Endothelial cell of umbilical vein (primary cell): ENCODE measurements at regions of chr10 and their contacts with region 1.

Region 1: DNA sequence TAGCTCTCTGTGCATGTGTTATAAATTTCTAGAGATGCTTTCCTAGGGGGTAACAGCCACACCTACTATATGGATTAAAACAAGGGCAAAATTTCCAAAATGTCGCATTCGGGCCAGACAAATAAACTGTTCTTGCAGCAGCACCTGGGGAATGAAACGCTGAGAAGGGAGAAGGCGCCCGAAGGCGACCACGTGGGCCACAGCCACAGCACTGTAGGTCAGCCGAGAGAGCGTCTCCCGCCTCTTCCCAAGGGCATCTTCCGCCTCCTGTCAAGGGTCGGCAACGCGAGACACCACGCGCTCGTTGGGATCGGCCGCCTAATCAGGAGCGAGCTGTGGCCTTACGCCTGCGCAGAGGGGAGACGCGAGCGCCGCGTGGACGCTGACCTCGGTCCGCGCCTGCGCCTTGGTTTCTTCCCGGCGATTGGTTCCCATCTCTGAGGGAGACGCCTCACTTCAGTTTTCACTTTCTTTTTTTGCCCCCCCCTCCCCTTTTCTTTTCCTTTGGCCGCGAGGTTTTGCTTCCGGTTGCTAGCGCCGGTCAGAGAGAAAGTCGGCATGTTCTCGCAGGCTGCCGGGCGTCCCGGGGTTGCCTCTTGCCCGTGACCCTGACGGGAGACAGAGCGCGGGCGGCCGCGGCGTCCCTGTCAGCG is at the start of gene TASOR2:
- DNase-seq: peak; percentile 99
- H3K4me3 ChIP-seq: peak within 1 kb of the TSS; percentile 62 to 97 (median 89)
- H3K27ac ChIP-seq: peak within 1 kb of the TSS; percentile 68
- H3K4me1 ChIP-seq: peaks cover 9% of the 10 kb centered on the region
- H3K27me3 ChIP-seq: peaks cover 6 to 17% of the 10 kb centered on the region in 2 experiments
- CTCF ChIP-seq: no peak
- POLR2A ChIP-seq: peak; percentile 60
- total RNA-seq, gene TASOR2: 48.9 and 49.9 TPM in 2 replicates

Region 2: GRCh38 chr10:5548527-5549223 is 135.8 kb before region 1 on chr10:
- CTCF ChIA-PET with region 1: no interaction called
- POLR2A ChIA-PET with region 1: no interaction called
- dilution Hi-C with region 1: no loop called
- intact Hi-C with region 1: loop called (anchors 1 kb)
- DNase-seq: peak; percentile 89
- H3K4me3 ChIP-seq: no peak overlapping the region
- H3K27ac ChIP-seq: peak overlapping the region; percentile 93
- H3K4me1 ChIP-seq: peaks cover 48% of the 10 kb centered on the region
- H3K27me3 ChIP-seq: no peaks in the 10 kb centered on the region
- CTCF ChIP-seq: no peak
- POLR2A ChIP-seq: peak; percentile 5

Region 3: GRCh38 chr10:5666830-5667630 is 17.4 kb before region 1 on chr10:
- CTCF ChIA-PET with region 1: no interaction called
- POLR2A ChIA-PET with region 1: no interaction called
- dilution Hi-C with region 1: no loop called
- intact Hi-C with region 1: loop called (anchors 1 kb)
- DNase-seq: peak; percentile 17
- H3K4me3 ChIP-seq: peak overlapping the region in 1 of 3 experiments; percentile 94
- H3K27ac ChIP-seq: no peak overlapping the region
- H3K4me1 ChIP-seq: peaks cover 6% of the 10 kb centered on the region
- H3K27me3 ChIP-seq: peaks cover 0 to 5% of the 10 kb centered on the region in 2 experiments
- CTCF ChIP-seq: no peak
- POLR2A ChIP-seq: no peak

Region 4: GRCh38 chr10:5800790-5801189 is 116.3 kb after region 1 on chr10:
- CTCF ChIA-PET with region 1: no interaction called
- POLR2A ChIA-PET with region 1: no interaction called
- dilution Hi-C with region 1: no loop called
- intact Hi-C with region 1: no loop called
- DNase-seq: no peak
- H3K4me3 ChIP-seq: no peak overlapping the region
- H3K27ac ChIP-seq: no peak overlapping the region
- H3K4me1 ChIP-seq: no peaks in the 10 kb centered on the region
- H3K27me3 ChIP-seq: no peaks in the 10 kb centered on the region
- CTCF ChIP-seq: no peak
- POLR2A ChIP-seq: no peak

Region 5: GRCh38 chr10:5873515-5873995 is 189.1 kb after region 1 on chr10:
- CTCF ChIA-PET with region 1: interaction called, 3 read pairs
- POLR2A ChIA-PET with region 1: interaction called, 3 read pairs
- dilution Hi-C with region 1: no loop called
- intact Hi-C with region 1: loop called (anchors 1 kb)
- DNase-seq: peak; percentile 85
- H3K4me3 ChIP-seq: no peak overlapping the region
- H3K27ac ChIP-seq: no peak overlapping the region
- H3K4me1 ChIP-seq: no peaks in the 10 kb centered on the region
- H3K27me3 ChIP-seq: no peaks in the 10 kb centered on the region
- CTCF ChIP-seq: peak; percentile 55 to 62
- POLR2A ChIP-seq: no peak

Region 6: GRCh38 chr10:5889624-5890451 is 205.4 kb after region 1 on chr10 and contains the starts of genes ANKRD16 and FBH1:
- CTCF ChIA-PET with region 1: no interaction called
- POLR2A ChIA-PET with region 1: no interaction called
- dilution Hi-C with region 1: no loop called
- intact Hi-C with region 1: loop called (anchors 1 kb)
- DNase-seq: peak; percentile 99
- H3K4me3 ChIP-seq: peak within 1 kb of the TSS; percentile 16 to 95 (median 62)
- H3K27ac ChIP-seq: peak within 1 kb of the TSS; percentile 44
- H3K4me1 ChIP-seq: peaks cover 36% of the 10 kb centered on the region
- H3K27me3 ChIP-seq: no peaks in the 10 kb centered on the region
- CTCF ChIP-seq: no peak
- POLR2A ChIP-seq: peak; percentile 82
- total RNA-seq, gene ANKRD16: 4.4 and 6.9 TPM in 2 replicates
- total RNA-seq, gene FBH1: 86.1 and 97.0 TPM in 2 replicates